Activated CD4-positive, alpha-beta T cell treated with anti-CD3 and anti-CD28 coated beads for 36 hours (primary cell): ENCODE measurements at regions of chr6 and their contacts with region 1.

Region 1: DNA sequence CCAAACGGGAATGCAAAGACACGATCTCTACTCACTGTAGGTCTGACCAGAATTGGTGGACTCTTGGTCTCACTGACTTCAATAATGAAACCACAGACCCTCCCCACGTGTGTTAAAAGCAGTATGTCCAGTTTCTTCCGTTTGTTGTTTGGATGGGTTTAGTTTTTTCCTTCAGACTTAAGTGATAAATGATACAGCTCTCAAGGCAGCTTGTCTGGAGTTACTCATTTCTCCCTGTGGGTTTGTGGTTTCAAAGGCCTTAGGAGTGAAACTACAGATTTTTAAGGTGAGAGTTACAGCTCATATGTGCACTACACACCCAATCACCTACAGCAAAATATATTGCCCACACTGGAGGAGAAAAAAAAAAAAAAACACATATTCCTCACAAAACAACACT is 86.7 kb upstream of the STMND1 start:
- DNase-seq: peak; percentile 47
- ATAC-seq: peak; percentile 92
- H3K4me3 Mint-ChIP-seq: peak overlapping the region; percentile 36
- H3K27ac Mint-ChIP-seq: peak overlapping the region; percentile 38
- H3K4me1 Mint-ChIP-seq: peaks cover 17% of the 10 kb centered on the region
- H3K27me3 Mint-ChIP-seq: peaks cover 27% of the 10 kb centered on the region

Region 2: GRCh38 chr6:16602035-16602434 is 413.1 kb before region 1 on chr6:
- CTCF ChIA-PET with region 1: no interaction called
- POLR2A ChIA-PET with region 1: no interaction called
- intact Hi-C with region 1: loop called in 1 of 2 experiments (anchors 5 kb)
- DNase-seq: peak; percentile 78
- ATAC-seq: peak; percentile 99
- H3K4me3 Mint-ChIP-seq: no peak overlapping the region
- H3K27ac Mint-ChIP-seq: peak overlapping the region; percentile 55
- H3K4me1 Mint-ChIP-seq: peaks cover 42% of the 10 kb centered on the region
- H3K27me3 Mint-ChIP-seq: peaks cover 3% of the 10 kb centered on the region

Region 3: GRCh38 chr6:16949716-16950115 is 65.4 kb before region 1 on chr6:
- CTCF ChIA-PET with region 1: interaction called, 3 read pairs
- POLR2A ChIA-PET with region 1: no interaction called
- intact Hi-C with region 1: loop called in 1 of 2 experiments (anchors 1 kb)
- DNase-seq: no peak
- ATAC-seq: no peak
- H3K4me3 Mint-ChIP-seq: no peak overlapping the region
- H3K27ac Mint-ChIP-seq: no peak overlapping the region
- H3K4me1 Mint-ChIP-seq: peaks cover 21% of the 10 kb centered on the region
- H3K27me3 Mint-ChIP-seq: peaks cover 45% of the 10 kb centered on the region